ENCODE measurements at regions of chr17 and their contacts with region 1.

Region 1: DNA sequence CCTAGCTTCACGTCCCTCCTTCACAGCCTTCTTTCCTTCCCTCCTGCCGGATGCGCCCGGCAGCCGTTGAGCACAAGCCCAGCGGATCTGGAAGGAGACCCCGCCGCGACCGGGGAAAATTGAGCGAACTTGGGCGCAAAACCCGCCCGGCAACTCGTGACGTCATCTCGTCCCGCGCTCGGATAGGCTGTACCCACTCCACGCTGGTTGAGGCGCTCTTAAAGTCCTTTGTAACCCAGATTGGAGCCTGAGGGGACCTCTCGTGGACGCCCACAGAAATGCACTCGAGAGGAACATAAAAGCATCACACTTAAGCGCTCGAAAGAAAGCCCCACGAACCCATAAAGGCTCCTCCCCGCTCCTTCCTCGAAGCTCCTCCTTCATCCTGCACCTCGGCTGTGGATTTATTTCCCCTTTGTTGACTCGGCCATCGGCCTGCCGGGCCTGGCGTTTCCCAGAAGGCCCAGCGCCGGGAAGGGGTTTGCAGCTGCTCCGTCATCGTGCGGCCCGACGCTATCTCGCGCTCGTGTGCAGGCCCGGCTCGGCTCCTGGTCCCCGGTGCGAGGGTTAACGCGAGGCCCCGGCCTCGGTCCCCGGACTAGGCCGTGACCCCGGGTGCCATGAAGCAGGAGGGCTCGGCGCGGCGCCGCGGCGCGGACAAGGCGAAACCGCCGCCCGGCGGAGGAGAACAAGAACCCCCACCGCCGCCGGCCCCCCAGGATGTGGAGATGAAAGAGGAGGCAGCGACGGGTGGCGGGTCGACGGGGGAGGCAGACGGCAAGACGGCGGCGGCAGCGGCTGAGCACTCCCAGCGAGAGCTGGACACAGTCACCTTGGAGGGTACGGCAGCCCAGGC is at the start of gene PSMD3:
- DNase-seq: peak; percentile 99
- ATAC-seq: peak; percentile 98
- H3K4me3 Mint-ChIP-seq: peak within 1 kb of the TSS; percentile 92
- H3K27ac Mint-ChIP-seq: peak within 1 kb of the TSS; percentile 92
- H3K4me1 Mint-ChIP-seq: peaks cover 31% of the 10 kb centered on the region
- H3K27me3 Mint-ChIP-seq: peaks cover 10% of the 10 kb centered on the region
- total RNA-seq, gene PSMD3: 104 to 116 TPM

Region 2: GRCh38 chr17:39894681-39895376 is 85.8 kb before region 1 on chr17:
- CTCF ChIA-PET with region 1: no interaction called
- POLR2A ChIA-PET with region 1: no interaction called
- DNase-seq: no peak
- ATAC-seq: no peak
- H3K4me3 Mint-ChIP-seq: no peak overlapping the region
- H3K27ac Mint-ChIP-seq: peak overlapping the region; percentile 50
- H3K4me1 Mint-ChIP-seq: peaks cover 9% of the 10 kb centered on the region
- H3K27me3 Mint-ChIP-seq: peaks cover 5% of the 10 kb centered on the region

Region 3: GRCh38 chr17:39904990-39905288 is 75.6 kb before region 1 on chr17:
- CTCF ChIA-PET with region 1: no interaction called
- POLR2A ChIA-PET with region 1: no interaction called
- DNase-seq: no peak
- ATAC-seq: no peak
- H3K4me3 Mint-ChIP-seq: no peak overlapping the region
- H3K27ac Mint-ChIP-seq: peak overlapping the region; percentile 62
- H3K4me1 Mint-ChIP-seq: peaks cover 48% of the 10 kb centered on the region
- H3K27me3 Mint-ChIP-seq: no peaks in the 10 kb centered on the region

Region 4: DNA sequence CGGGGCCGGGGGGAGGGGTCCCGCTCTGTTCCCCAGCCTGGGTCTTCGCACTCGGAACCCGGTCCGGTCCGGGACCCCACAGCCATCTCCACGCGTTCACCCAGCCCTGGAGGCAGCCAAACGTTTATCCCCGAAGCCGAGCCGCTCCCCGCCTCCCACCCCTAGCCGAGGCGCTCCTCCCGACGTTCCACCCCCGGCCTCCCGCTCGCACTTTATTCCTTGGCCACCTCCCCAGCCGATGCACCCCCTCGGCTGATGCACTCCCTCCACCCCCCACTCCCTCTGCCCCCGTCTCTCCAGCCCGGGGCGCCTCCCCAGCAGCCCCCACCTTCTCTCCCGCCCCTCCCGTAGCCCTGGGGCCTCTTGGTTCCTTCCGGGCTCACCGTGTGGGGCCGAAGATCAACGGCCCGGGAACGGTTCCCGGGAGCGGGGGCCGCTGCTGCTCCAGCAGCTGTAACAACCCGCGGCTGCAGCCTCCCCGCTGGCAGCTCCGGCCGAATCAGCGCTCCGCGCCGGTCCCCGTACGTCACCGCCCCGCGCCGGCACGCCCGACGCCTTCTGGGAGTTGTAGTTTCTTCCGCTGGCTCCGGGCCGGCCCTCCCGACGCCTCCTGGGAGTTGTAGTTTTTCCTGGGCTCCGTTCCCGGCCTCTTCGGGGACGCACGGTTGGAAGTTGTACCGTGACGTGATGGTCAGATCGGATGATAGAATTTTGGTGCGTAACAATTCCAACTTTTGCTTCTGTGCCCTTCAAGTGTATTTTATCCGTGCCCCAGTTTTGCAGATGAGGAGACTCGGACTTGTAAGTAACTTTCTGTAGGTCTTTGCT is 53.3 kb before region 1 on chr17 and contains the starts of genes LRRC3C and ORMDL3:
- CTCF ChIA-PET with region 1: interaction called, 27 read pairs
- POLR2A ChIA-PET with region 1: interaction called, 12 read pairs
- DNase-seq: peak; percentile 94
- ATAC-seq: peak; percentile 81
- H3K4me3 Mint-ChIP-seq: peak within 1 kb of the TSS; percentile 86
- H3K27ac Mint-ChIP-seq: peak within 1 kb of the TSS; percentile 88
- H3K4me1 Mint-ChIP-seq: peaks cover 53% of the 10 kb centered on the region
- H3K27me3 Mint-ChIP-seq: no peaks in the 10 kb centered on the region
- total RNA-seq, gene LRRC3C: not detected
- total RNA-seq, gene ORMDL3: 151 to 168 TPM

Region 5: DNA sequence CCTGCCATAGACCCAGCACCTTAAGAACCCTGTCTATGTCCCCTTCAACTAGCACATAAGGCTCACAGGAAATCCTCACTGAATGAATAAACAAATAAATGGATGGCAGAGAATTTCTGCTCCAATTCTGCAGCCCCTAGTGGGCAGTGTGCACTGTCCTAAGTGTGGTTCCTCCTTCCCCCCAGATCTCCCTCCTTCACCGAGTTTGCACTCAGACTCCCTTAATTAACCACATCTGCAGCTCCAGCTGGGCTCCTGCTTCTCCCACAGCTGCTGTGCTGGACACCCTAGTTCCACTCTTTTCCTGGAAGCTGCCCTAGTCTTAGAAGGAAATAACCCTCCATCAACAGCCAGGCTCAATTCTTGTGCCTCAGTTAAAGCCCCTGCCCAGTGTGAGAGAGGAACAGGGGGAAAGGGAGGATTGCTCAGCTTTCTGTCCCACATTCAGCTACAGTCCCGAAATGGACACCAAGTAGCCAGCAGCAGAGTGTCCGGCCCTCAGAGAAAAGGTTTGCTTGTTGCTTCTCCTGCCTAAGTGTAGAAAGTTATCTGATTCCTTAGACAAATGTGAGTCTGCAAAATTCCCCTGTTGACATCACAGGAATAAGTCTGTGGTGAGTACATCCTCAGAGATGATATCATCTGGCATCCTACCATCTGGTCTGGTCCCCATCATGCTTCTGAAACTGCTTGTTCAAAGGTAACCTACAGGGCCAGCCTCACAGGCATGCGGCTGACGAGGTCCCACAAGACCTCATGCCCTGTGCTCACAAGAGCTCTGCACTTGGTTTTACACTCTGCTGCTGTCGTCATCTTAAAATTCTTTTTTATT is 40.8 kb before region 1 on chr17:
- CTCF ChIA-PET with region 1: interaction called, 12 read pairs
- POLR2A ChIA-PET with region 1: interaction called, 8 read pairs
- DNase-seq: peak; percentile 67
- ATAC-seq: peak; percentile 87
- H3K4me3 Mint-ChIP-seq: no peak overlapping the region
- H3K27ac Mint-ChIP-seq: peak overlapping the region; percentile 59
- H3K4me1 Mint-ChIP-seq: peaks cover 22% of the 10 kb centered on the region
- H3K27me3 Mint-ChIP-seq: no peaks in the 10 kb centered on the region

Region 6: GRCh38 chr17:39952680-39953470 is 27.7 kb before region 1 on chr17:
- CTCF ChIA-PET with region 1: interaction called, 115 read pairs
- POLR2A ChIA-PET with region 1: interaction called, 16 read pairs
- DNase-seq: peak; percentile 97
- ATAC-seq: peak; percentile 86
- H3K4me3 Mint-ChIP-seq: peak overlapping the region; percentile 77
- H3K27ac Mint-ChIP-seq: peak overlapping the region; percentile 88
- H3K4me1 Mint-ChIP-seq: peaks cover 29% of the 10 kb centered on the region
- H3K27me3 Mint-ChIP-seq: peaks cover 2% of the 10 kb centered on the region

Region 7: GRCh38 chr17:39963829-39964228 is 16.8 kb before region 1 on chr17:
- CTCF ChIA-PET with region 1: interaction called, 115 read pairs
- POLR2A ChIA-PET with region 1: interaction called, 8 read pairs
- DNase-seq: peak; percentile 40
- ATAC-seq: peak; percentile 28
- H3K4me3 Mint-ChIP-seq: no peak overlapping the region
- H3K27ac Mint-ChIP-seq: peak overlapping the region; percentile 41
- H3K4me1 Mint-ChIP-seq: peaks cover 29% of the 10 kb centered on the region
- H3K27me3 Mint-ChIP-seq: peaks cover 8% of the 10 kb centered on the region

Region 8: DNA sequence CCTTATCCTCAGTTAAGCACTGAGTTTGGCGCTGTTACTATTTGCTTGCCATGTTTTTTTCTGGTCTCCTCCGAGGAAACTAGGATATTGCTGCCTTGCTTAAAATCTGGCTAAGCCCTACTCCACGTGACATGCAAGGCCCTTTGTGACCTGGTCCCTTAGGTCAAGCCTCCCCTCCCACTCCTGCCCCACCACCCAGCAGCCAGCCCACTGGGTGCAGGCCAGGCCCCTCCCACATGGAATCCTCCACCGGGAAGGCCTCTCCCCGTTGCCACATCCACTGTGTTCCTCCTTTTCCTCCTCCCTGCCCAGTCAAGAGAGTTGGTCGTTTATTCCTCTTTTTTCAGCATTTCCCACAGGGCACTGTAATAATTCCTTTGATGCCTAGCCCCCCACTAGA is 16.2 kb after region 1 on chr17:
- CTCF ChIA-PET with region 1: no interaction called
- POLR2A ChIA-PET with region 1: no interaction called
- DNase-seq: no peak
- ATAC-seq: no peak
- H3K4me3 Mint-ChIP-seq: no peak overlapping the region
- H3K27ac Mint-ChIP-seq: no peak overlapping the region
- H3K4me1 Mint-ChIP-seq: no peaks in the 10 kb centered on the region
- H3K27me3 Mint-ChIP-seq: no peaks in the 10 kb centered on the region

Region 9: GRCh38 chr17:40134184-40134583 is 153.6 kb after region 1 on chr17:
- CTCF ChIA-PET with region 1: no interaction called
- POLR2A ChIA-PET with region 1: no interaction called
- DNase-seq: no peak
- ATAC-seq: no peak
- H3K4me3 Mint-ChIP-seq: no peak overlapping the region
- H3K27ac Mint-ChIP-seq: no peak overlapping the region
- H3K4me1 Mint-ChIP-seq: peaks cover 16% of the 10 kb centered on the region
- H3K27me3 Mint-ChIP-seq: no peaks in the 10 kb centered on the region